ENCODE measurements at regions of chr12 and their contacts with region 1.

Region 1: DNA sequence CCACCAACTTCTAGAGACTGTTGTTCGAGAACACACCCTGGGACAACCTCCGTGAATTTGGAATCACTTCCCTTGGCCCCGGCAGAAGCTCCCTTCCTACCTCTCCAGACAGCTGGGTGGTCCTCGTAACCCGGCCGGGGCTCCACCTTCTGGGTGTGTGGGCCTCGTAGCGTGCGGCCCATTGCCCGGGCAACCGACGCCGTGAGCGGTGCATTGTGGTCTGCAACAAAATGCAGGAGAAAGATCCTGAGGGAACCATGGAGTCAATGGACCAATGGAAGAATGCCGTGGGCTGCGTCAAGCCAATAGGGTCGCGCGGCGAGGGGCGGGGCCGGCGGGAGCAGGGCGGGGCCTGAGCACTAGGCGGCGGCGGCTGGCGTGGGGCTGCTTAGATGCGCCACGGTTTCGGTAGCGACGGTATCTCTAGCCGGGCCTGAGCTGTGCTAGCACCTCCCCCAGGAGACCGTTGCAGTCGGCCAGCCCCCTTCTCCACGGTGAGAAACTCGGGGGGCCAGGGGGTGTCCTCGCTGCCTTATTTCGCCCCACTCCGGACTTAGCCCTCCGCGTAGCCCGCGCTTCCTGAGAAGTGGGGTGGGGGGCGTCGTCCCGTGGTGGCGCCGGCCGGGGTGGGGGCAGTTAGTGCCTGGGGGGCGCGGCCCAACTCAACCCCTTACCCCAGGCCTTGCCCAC is at the start of gene DYNLL1:
- DNase-seq: peak; percentile 99
- ATAC-seq: peak; percentile 96
- H3K4me3 Mint-ChIP-seq: peak within 1 kb of the TSS; percentile 96
- H3K27ac Mint-ChIP-seq: peak within 1 kb of the TSS; percentile 91
- H3K4me1 Mint-ChIP-seq: peaks cover 29% of the 10 kb centered on the region
- H3K27me3 Mint-ChIP-seq: no peaks in the 10 kb centered on the region
- CTCF ChIP-seq: no peak
- total RNA-seq, gene DYNLL1: 159 and 180 TPM in 2 replicates

Region 2: GRCh38 chr12:119008691-119009221 is 1487.1 kb before region 1 on chr12:
- CTCF ChIA-PET with region 1: no interaction called
- POLR2A ChIA-PET with region 1: no interaction called
- intact Hi-C with region 1: no loop called
- DNase-seq: no peak
- ATAC-seq: no peak
- H3K4me3 Mint-ChIP-seq: no peak overlapping the region
- H3K27ac Mint-ChIP-seq: no peak overlapping the region
- H3K4me1 Mint-ChIP-seq: no peaks in the 10 kb centered on the region
- H3K27me3 Mint-ChIP-seq: peaks cover 32% of the 10 kb centered on the region
- CTCF ChIP-seq: no peak

Region 3: DNA sequence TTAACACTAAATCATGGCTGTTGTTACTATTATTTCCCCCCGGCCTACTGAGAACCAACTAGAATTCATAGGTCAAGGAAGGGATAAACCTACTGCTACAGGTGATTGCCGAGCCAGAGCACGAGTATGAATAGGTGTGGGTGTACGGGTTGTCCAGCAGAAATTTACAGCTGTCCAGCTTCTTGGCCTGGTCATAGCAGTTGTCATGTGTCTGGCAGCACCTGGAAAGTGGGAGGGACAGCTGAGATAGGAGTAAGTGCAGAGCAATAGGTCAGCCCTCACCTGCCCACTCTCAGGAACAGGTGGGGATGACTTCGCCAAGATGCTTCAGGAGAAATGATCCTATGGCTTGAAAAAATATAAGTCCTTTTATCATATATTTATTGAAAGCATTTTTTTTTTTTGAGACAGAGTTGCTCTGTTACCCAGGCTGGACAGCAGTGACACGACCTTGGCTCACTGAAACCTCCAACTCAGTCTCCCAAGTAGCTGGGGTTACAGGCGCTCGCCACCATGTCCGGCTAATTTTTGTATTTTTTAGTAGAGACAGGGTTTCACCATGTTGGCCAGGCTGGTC is 170.9 kb before region 1 on chr12:
- CTCF ChIA-PET with region 1: no interaction called
- POLR2A ChIA-PET with region 1: no interaction called
- intact Hi-C with region 1: loop called (anchors 1 kb)
- DNase-seq: no peak
- ATAC-seq: no peak
- H3K4me3 Mint-ChIP-seq: peak overlapping the region; percentile 83
- H3K27ac Mint-ChIP-seq: no peak overlapping the region
- H3K4me1 Mint-ChIP-seq: peaks cover 7% of the 10 kb centered on the region
- H3K27me3 Mint-ChIP-seq: peaks cover 9% of the 10 kb centered on the region
- CTCF ChIP-seq: no peak

Region 4: DNA sequence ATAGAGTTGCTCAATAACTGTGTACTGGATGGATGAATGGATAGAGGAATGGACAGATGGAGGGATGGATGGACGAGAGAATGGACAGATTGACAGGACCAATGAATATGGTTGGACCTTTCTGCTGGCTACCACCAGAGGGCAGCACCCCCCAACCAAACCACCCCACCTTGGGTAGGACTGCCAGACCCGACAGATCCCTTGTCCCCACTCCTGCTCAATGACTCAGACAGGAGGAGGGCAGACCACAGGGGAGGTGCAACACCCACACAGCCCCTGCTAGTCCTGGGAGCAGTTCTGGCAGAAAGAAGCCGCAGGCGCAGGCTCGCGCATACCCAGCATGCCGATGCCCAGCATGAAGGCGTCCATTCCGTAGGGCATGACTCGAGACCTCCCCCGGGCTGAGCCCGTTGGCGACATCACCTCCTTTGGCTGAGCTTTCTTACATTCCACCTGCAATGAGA is 139.3 kb before region 1 on chr12:
- CTCF ChIA-PET with region 1: interaction called, 4 read pairs
- POLR2A ChIA-PET with region 1: no interaction called
- intact Hi-C with region 1: loop called (anchors 1 kb)
- DNase-seq: peak; percentile 59
- ATAC-seq: peak; percentile 91
- H3K4me3 Mint-ChIP-seq: no peak overlapping the region
- H3K27ac Mint-ChIP-seq: no peak overlapping the region
- H3K4me1 Mint-ChIP-seq: peaks cover 3% of the 10 kb centered on the region
- H3K27me3 Mint-ChIP-seq: peaks cover 26% of the 10 kb centered on the region
- CTCF ChIP-seq: peak; percentile 22

Region 5: GRCh38 chr12:120445911-120446843 is 49.7 kb before region 1 on chr12 and contains the starts of genes GATC and TRIAP1:
- CTCF ChIA-PET with region 1: no interaction called
- POLR2A ChIA-PET with region 1: interaction called, 5 read pairs
- intact Hi-C with region 1: loop called (anchors 2 kb)
- DNase-seq: peak; percentile 92
- ATAC-seq: peak; percentile 95
- H3K4me3 Mint-ChIP-seq: peak within 1 kb of the TSS; percentile 96
- H3K27ac Mint-ChIP-seq: peak within 1 kb of the TSS; percentile 95
- H3K4me1 Mint-ChIP-seq: peaks cover 31% of the 10 kb centered on the region
- H3K27me3 Mint-ChIP-seq: no peaks in the 10 kb centered on the region
- CTCF ChIP-seq: no peak
- total RNA-seq, gene GATC: 33.4 and 35.2 TPM in 2 replicates
- total RNA-seq, gene TRIAP1: 18.2 and 18.6 TPM in 2 replicates

Region 6: DNA sequence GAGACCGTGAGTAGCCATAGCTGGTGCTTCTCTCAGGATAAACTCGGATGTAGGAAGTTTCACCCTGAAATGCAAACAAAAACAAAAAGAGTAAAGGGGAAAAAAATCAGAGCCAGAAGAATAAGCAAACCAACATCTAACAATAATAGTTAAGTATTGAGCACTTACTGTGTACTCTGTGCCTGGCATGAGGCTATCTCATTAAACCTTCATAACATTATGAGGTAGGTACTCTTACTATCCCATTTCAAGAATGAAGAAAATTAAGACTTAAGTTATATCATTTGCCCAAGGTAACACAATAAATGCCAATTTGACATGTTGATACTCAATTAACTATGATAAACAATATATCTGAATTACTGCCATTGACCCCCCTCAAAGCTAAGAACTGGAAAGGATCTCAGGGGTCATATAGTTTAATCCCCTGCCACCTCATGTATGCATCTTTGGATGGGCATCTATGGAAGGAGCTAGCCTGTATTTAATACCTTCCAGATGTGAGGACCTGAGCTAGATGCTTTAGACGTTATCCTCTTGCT is 33.7 kb before region 1 on chr12:
- CTCF ChIA-PET with region 1: no interaction called
- POLR2A ChIA-PET with region 1: no interaction called
- intact Hi-C with region 1: no loop called
- DNase-seq: no peak
- ATAC-seq: no peak
- H3K4me3 Mint-ChIP-seq: no peak overlapping the region
- H3K27ac Mint-ChIP-seq: no peak overlapping the region
- H3K4me1 Mint-ChIP-seq: peaks cover 16% of the 10 kb centered on the region
- H3K27me3 Mint-ChIP-seq: no peaks in the 10 kb centered on the region
- CTCF ChIP-seq: no peak

Region 7: GRCh38 chr12:120528861-120529525 is 33.1 kb after region 1 on chr12 and contains the start of gene COQ5:
- CTCF ChIA-PET with region 1: no interaction called
- POLR2A ChIA-PET with region 1: interaction called, 9 read pairs
- intact Hi-C with region 1: loop called (anchors 1 kb)
- DNase-seq: peak; percentile 76
- ATAC-seq: peak; percentile 96
- H3K4me3 Mint-ChIP-seq: peak within 1 kb of the TSS; percentile 100
- H3K27ac Mint-ChIP-seq: peak within 1 kb of the TSS; percentile 99
- H3K4me1 Mint-ChIP-seq: peaks cover 29% of the 10 kb centered on the region
- H3K27me3 Mint-ChIP-seq: no peaks in the 10 kb centered on the region
- CTCF ChIP-seq: no peak
- total RNA-seq, gene COQ5: 25.3 and 29.5 TPM in 2 replicates

Region 8: DNA sequence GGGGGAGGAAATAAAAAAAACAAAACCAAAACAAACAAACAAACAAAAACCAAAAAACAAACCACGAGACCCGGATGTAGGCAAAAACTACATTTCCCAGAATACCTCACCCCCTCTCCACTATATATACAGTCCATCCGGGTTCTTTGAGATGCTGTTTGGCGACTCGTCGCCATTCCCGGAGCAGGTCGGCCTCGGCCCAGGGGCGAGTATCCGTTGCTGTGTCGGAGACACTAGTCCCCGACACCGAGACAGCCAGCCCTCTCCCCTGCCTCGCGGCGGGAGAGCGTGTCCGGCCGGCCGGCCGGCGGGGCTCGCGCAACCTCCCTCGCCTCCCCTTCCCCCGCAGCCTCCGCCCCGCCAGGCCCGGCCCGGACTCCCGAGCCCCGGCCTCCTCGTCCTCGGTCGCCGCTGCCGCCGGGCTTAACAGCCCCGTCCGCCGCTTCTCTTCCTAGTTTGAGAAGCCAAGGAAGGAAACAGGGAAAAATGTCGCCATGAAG is 38.4 kb after region 1 on chr12 and contains the start of gene RNF10:
- CTCF ChIA-PET with region 1: interaction called, 3 read pairs
- POLR2A ChIA-PET with region 1: interaction called, 9 read pairs
- intact Hi-C with region 1: loop called (anchors 1 kb)
- DNase-seq: peak; percentile 66
- ATAC-seq: peak; percentile 68
- H3K4me3 Mint-ChIP-seq: peak within 1 kb of the TSS; percentile 93
- H3K27ac Mint-ChIP-seq: peak within 1 kb of the TSS; percentile 91
- H3K4me1 Mint-ChIP-seq: peaks cover 60% of the 10 kb centered on the region
- H3K27me3 Mint-ChIP-seq: no peaks in the 10 kb centered on the region
- CTCF ChIP-seq: no peak
- total RNA-seq, gene RNF10: 180 and 200 TPM in 2 replicates

Region 9: DNA sequence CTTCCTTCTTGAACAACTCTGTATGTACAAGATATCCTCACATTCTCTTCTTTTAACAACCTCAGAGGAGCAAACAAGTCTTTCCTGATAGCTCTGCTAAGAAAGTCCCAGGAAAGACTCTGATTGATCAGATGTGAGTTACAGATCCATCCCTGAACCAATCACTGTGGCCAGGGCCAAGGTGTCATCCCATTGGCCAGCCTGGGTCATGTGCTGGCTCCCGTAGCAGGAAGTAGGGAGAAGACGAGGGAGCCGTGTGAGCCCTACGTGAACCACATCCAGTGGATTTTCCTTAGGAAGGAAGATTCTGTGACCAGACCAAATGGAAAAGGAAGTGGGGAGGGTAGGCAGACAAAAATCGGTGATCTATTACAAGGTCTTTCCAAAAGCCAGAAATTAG is 642.4 kb after region 1 on chr12:
- CTCF ChIA-PET with region 1: no interaction called
- POLR2A ChIA-PET with region 1: no interaction called
- intact Hi-C with region 1: no loop called
- DNase-seq: no peak
- ATAC-seq: no peak
- H3K4me3 Mint-ChIP-seq: no peak overlapping the region
- H3K27ac Mint-ChIP-seq: no peak overlapping the region
- H3K4me1 Mint-ChIP-seq: peaks cover 14% of the 10 kb centered on the region
- H3K27me3 Mint-ChIP-seq: no peaks in the 10 kb centered on the region
- CTCF ChIP-seq: no peak

Measured in activated B cell treated with CpG ODN at 0.5 μM for 24 hours (primary cell).